GM10248 (cell line): ENCODE measurements at regions of chr20 and their contacts with region 1.

Region 1: GRCh38 chr20:22962557-22963438 is 72.3 kb upstream of the SSTR4 start:
- DNase-seq: no peak
- CTCF ChIP-seq: no peak

Region 2: GRCh38 chr20:22861229-22861980 is 101.4 kb before region 1 on chr20:
- CTCF ChIA-PET with region 1: no interaction called
- POLR2A ChIA-PET with region 1: no interaction called
- DNase-seq: no peak
- CTCF ChIP-seq: no peak

Region 3: DNA sequence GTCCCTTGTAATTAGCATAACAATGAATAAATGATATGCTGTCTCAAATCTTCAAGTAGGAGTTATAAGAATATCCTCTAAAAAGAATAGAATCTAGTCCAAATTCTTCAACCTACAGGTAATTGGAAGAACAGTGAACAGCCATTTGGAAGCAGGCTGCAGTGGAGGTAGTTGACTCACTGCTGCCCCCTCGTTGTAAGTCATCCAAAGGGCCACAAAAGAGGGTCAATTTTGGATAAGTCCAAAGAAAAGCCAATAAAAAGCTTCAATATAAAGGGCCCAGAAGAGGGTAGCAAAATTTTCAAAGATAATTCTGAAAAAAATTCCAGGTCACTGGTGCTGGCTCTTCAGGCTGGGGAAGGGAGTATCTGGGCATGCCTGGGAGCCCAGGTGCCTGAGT is 11.6 kb after region 1 on chr20:
- CTCF ChIA-PET with region 1: interaction called, 33 read pairs
- POLR2A ChIA-PET with region 1: no interaction called
- DNase-seq: no peak
- CTCF ChIP-seq: no peak